ENCODE measurements at regions of chr20 and their contacts with region 1.

Region 1: DNA sequence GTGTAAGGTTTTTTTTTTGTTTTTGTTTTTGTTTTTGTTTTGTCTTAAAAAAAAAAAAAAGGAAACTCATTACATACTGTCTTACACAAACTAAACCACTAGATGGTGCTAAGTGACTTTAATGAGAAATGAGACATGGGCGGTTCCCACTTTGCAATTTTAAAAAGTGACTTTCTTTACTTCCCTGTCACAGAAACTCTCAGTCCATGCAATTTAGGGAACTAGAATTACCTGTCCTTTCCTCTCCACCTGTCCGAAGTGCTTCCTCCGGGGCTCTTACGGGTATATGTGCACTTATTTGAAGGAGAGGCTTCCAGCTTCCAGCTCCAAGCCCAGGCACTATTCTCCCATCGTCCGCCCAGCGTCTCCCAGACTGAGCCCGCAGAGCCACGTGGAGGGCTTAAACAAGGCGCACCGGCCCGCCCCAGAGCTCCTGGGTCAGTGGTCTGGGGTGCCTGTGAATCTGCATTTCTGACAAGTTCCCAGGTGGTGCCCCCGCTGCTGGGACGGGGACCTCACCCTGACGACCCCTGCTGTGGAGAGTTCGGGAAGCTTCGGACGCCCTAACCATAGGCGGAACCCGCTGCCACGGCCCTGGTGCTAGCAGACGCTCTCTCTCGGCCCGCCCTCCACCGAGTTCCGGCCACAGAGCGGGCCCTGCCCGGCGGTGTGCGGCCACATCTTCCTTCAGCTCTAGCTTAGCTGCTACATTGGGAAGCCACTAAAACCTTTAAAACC is 26.1 kb downstream of the BFSP1 start:
- DNase-seq: peak; percentile 25
- ATAC-seq: peak; percentile 92
- H3K4me3 ChIP-seq: peak overlapping the region; percentile 56; the same call in 1 of the 2 replicates
- H3K27ac ChIP-seq: no peak overlapping the region
- H3K4me1 ChIP-seq: peaks cover 3% of the 10 kb centered on the region
- H3K27me3 ChIP-seq: no peaks in the 10 kb centered on the region
- CTCF ChIP-seq: peak; percentile 59 to 71 (median 61)
- EP300 ChIP-seq: no peak
- POLR2A ChIP-seq: no peak
- RAD21 ChIP-seq: peak; percentile 75

Region 2: GRCh38 chr20:17334932-17335331 is 170.1 kb before region 1 on chr20:
- CTCF ChIA-PET with region 1: no interaction called
- POLR2A ChIA-PET with region 1: no interaction called
- RAD21 ChIA-PET with region 1: no interaction called
- SMC1A ChIA-PET with region 1: no interaction called
- in situ Hi-C with region 1: no loop called
- intact Hi-C with region 1: no loop called
- DNase-seq: no peak
- ATAC-seq: no peak
- H3K4me3 ChIP-seq: no peak overlapping the region
- H3K27ac ChIP-seq: no peak overlapping the region
- H3K4me1 ChIP-seq: no peaks in the 10 kb centered on the region
- H3K27me3 ChIP-seq: no peaks in the 10 kb centered on the region
- CTCF ChIP-seq: no peak
- EP300 ChIP-seq: no peak
- POLR2A ChIP-seq: no peak
- RAD21 ChIP-seq: no peak

Region 3: DNA sequence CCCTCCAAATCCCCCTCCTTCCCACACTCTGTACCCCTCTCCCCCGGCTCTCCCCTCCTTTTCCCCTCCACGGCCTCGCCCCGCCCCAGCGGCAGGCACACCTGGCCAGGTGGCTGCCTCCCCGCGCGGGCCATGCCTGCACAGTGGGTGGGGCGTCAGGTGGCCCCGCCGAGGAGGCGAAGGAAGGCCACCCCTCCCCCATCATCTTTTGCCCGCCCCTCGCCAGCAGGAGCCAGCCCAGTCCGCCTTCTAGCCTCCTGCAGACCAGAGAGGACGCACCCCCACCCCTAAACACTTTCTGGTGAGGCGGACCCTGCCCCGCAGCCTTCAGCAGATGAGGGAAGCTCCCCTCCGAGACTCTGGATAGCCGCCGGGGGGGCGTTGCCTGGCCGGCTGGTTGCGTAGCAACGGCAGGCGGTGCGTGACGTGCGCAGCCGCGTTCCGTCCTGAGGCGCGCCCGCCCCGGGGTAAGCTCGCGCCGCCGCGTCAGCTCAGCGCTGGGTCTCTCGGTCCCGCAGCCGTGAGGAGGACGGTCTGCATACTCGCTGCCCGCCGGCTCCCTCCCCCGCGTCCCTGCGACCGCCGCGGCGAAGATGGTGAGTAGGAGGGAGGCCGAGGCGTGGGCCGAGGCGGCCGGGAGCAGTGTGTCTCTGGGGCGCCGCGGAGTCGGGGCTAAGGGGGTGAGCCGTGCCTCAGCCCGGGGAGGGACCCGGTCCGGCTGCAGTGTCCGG is 64.7 kb after region 1 on chr20 and contains the start of gene DSTN:
- CTCF ChIA-PET with region 1: no interaction called
- POLR2A ChIA-PET with region 1: no interaction called
- RAD21 ChIA-PET with region 1: interaction called, 12 read pairs
- SMC1A ChIA-PET with region 1: interaction called, 3 read pairs
- in situ Hi-C with region 1: no loop called
- intact Hi-C with region 1: no loop called
- DNase-seq: peak; percentile 38
- ATAC-seq: peak; percentile 94
- H3K4me3 ChIP-seq: peak within 1 kb of the TSS; percentile 98
- H3K27ac ChIP-seq: peak within 1 kb of the TSS; percentile 45
- H3K4me1 ChIP-seq: peaks cover 4% of the 10 kb centered on the region
- H3K27me3 ChIP-seq: no peaks in the 10 kb centered on the region
- CTCF ChIP-seq: no peak
- EP300 ChIP-seq: no peak
- POLR2A ChIP-seq: peak; percentile 88
- RAD21 ChIP-seq: no peak
- polyA plus RNA-seq, gene DSTN: 34.8 to 46.6 TPM

Region 4: GRCh38 chr20:17617551-17618223 is 112.6 kb after region 1 on chr20:
- CTCF ChIA-PET with region 1: interaction called, 4 read pairs
- POLR2A ChIA-PET with region 1: no interaction called
- RAD21 ChIA-PET with region 1: interaction called, 5 read pairs
- SMC1A ChIA-PET with region 1: no interaction called
- in situ Hi-C with region 1: no loop called
- intact Hi-C with region 1: loop called (anchors 2 kb)
- DNase-seq: no peak
- ATAC-seq: peak; percentile 82
- H3K4me3 ChIP-seq: no peak overlapping the region
- H3K27ac ChIP-seq: no peak overlapping the region
- H3K4me1 ChIP-seq: no peaks in the 10 kb centered on the region
- H3K27me3 ChIP-seq: no peaks in the 10 kb centered on the region
- CTCF ChIP-seq: peak; percentile 47 to 61 (median 57); a peak in 5 of 6 replicates
- EP300 ChIP-seq: no peak
- POLR2A ChIP-seq: no peak
- RAD21 ChIP-seq: peak; percentile 89

Region 5: DNA sequence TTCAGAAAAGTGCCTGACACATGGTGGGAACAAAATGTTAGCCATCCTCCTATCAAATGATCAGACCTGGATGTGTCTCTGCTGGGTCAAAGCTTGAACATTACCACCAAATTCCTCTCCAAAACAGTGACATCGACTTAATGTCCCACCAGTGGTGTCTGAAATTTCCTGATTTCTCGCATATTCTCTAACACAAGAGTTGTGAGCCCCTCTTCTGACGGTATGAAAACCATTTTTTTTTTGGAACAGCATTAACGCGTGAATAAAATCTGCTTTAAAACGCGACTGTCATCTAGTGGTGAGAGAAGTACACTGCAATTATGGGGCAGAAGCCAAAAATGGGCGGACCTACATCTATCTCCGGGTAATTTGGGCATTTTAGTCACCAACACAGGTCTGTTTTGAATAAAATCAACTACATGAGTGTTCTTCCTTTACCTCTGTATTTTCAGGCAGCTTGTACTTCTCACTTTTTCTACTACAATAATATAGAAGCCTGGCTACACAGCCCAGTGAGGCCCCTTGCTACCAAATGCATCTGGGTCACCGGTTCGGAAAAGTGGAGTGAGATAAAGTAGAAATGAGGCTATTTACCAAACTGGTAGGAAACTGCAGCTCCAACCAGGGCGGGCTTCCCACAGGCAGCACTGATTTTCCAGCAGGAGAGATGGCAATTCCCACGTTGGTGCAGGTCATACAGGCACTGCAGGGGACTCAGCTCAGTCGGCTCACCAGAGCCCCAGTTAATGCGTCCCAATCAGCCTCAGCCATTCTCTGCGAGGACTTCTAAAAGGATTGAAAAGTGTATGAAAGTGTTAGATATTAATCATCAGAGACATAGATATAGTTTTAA is 491.1 kb after region 1 on chr20:
- CTCF ChIA-PET with region 1: interaction called, 20 read pairs
- POLR2A ChIA-PET with region 1: no interaction called
- RAD21 ChIA-PET with region 1: interaction called, 7 read pairs
- SMC1A ChIA-PET with region 1: interaction called, 7 read pairs
- in situ Hi-C with region 1: no loop called
- intact Hi-C with region 1: loop called (anchors 5 kb)
- DNase-seq: no peak
- ATAC-seq: peak; percentile 61
- H3K4me3 ChIP-seq: no peak overlapping the region
- H3K27ac ChIP-seq: no peak overlapping the region
- H3K4me1 ChIP-seq: peaks cover 21% of the 10 kb centered on the region
- H3K27me3 ChIP-seq: no peaks in the 10 kb centered on the region
- CTCF ChIP-seq: peak; percentile 97 to 99 (median 98)
- EP300 ChIP-seq: no peak
- POLR2A ChIP-seq: no peak
- RAD21 ChIP-seq: peak; percentile 99

Region 6: GRCh38 chr20:18005231-18006109 is 500.4 kb after region 1 on chr20:
- CTCF ChIA-PET with region 1: interaction called, 4 read pairs
- POLR2A ChIA-PET with region 1: no interaction called
- RAD21 ChIA-PET with region 1: interaction called, 12 read pairs
- SMC1A ChIA-PET with region 1: no interaction called
- in situ Hi-C with region 1: no loop called
- intact Hi-C with region 1: no loop called
- DNase-seq: peak; percentile 66
- ATAC-seq: peak; percentile 97
- H3K4me3 ChIP-seq: no peak overlapping the region
- H3K27ac ChIP-seq: peak overlapping the region; percentile 82
- H3K4me1 ChIP-seq: peaks cover 31% of the 10 kb centered on the region
- H3K27me3 ChIP-seq: no peaks in the 10 kb centered on the region
- CTCF ChIP-seq: no peak
- EP300 ChIP-seq: peak; percentile 78 to 88
- POLR2A ChIP-seq: peak; percentile 60
- RAD21 ChIP-seq: no peak

Region 7: DNA sequence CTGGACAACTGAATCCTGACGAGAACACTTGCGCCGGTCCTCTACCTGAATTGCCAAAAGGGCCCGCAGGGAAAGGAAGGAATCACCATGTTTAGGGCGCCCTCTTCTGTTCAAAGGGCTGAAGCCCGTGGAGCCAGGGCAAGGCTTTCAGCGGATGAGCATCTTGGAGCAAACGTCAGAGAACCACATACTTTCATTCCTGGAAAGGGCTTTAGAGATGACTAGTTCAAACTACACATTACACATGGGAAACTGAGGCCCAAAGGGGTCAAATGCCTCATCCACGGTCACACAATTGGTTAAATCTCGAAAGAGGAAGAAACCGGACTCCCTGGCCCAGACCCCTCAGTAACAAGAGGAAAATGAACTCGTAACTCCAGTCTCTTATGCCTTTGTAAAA is 771.8 kb after region 1 on chr20:
- CTCF ChIA-PET with region 1: interaction called, 24 read pairs
- POLR2A ChIA-PET with region 1: no interaction called
- RAD21 ChIA-PET with region 1: no interaction called
- SMC1A ChIA-PET with region 1: interaction called, 4 read pairs
- in situ Hi-C with region 1: loop called (anchors 5 kb)
- intact Hi-C with region 1: loop called (anchors 2 kb)
- DNase-seq: no peak
- ATAC-seq: peak; percentile 92
- H3K4me3 ChIP-seq: no peak overlapping the region
- H3K27ac ChIP-seq: no peak overlapping the region
- H3K4me1 ChIP-seq: no peaks in the 10 kb centered on the region
- H3K27me3 ChIP-seq: no peaks in the 10 kb centered on the region; a peak in 1 of 4 replicates
- CTCF ChIP-seq: peak; percentile 79 to 87 (median 87)
- EP300 ChIP-seq: no peak
- POLR2A ChIP-seq: no peak
- RAD21 ChIP-seq: peak; percentile 87

Measured in GM12878 (cell line).